CD14-positive monocyte (primary cell): ENCODE measurements at regions of chr19 and their contacts with region 1.

Region 1: GRCh38 chr19:703651-704446 is 4.9 kb upstream of the PALM start:
- DNase-seq: peak; percentile 90 to 94 (median 93)
- H3K4me3 ChIP-seq: peak overlapping the region; percentile 80 to 91 (median 86)
- H3K4me3 Mint-ChIP-seq: peak overlapping the region; percentile 94 to 98
- H3K27ac ChIP-seq: peak overlapping the region; percentile 58 to 66
- H3K27ac Mint-ChIP-seq: peak overlapping the region; percentile 92 to 98 (median 96)
- H3K4me1 ChIP-seq: peaks cover 53 to 60% of the 10 kb centered on the region in 2 donors
- H3K4me1 Mint-ChIP-seq: peaks cover 43% of the 10 kb centered on the region
- H3K27me3 ChIP-seq: peaks cover 0 to 9% of the 10 kb centered on the region in 2 donors
- H3K27me3 Mint-ChIP-seq: peaks cover 10 to 15% (median 15%) of the 10 kb centered on the region in 3 donors
- CTCF ChIP-seq: no peak

Region 2: GRCh38 chr19:680287-681028 is 23.4 kb before region 1 on chr19:
- intact Hi-C with region 1: loop called (anchors 1 kb)
- DNase-seq: peak; percentile 97 to 99 (median 99)
- H3K4me3 ChIP-seq: peak overlapping the region; percentile 45 to 76 (median 53)
- H3K4me3 Mint-ChIP-seq: peak overlapping the region; percentile 90 to 97
- H3K27ac ChIP-seq: peak overlapping the region; percentile 91 to 96
- H3K27ac Mint-ChIP-seq: peak overlapping the region; percentile 98 to 100 (median 100)
- H3K4me1 ChIP-seq: peaks cover 39 to 48% of the 10 kb centered on the region in 2 donors
- H3K4me1 Mint-ChIP-seq: peaks cover 37% of the 10 kb centered on the region
- H3K27me3 ChIP-seq: peaks cover 0 to 20% of the 10 kb centered on the region in 2 donors
- H3K27me3 Mint-ChIP-seq: peaks cover 5 to 32% (median 22%) of the 10 kb centered on the region in 3 donors
- CTCF ChIP-seq: peak; percentile 44

Region 3: GRCh38 chr19:728011-728410 is 24.2 kb after region 1 on chr19:
- intact Hi-C with region 1: no loop called
- DNase-seq: no peak
- H3K4me3 ChIP-seq: no peak overlapping the region
- H3K4me3 Mint-ChIP-seq: no peak overlapping the region
- H3K27ac ChIP-seq: no peak overlapping the region
- H3K27ac Mint-ChIP-seq: no peak overlapping the region
- H3K4me1 ChIP-seq: no peaks in the 10 kb centered on the region
- H3K4me1 Mint-ChIP-seq: peaks cover 3% of the 10 kb centered on the region
- H3K27me3 ChIP-seq: no peaks in the 10 kb centered on the region
- H3K27me3 Mint-ChIP-seq: peaks cover 2 to 16% (median 4%) of the 10 kb centered on the region in 3 donors
- CTCF ChIP-seq: no peak

Region 4: DNA sequence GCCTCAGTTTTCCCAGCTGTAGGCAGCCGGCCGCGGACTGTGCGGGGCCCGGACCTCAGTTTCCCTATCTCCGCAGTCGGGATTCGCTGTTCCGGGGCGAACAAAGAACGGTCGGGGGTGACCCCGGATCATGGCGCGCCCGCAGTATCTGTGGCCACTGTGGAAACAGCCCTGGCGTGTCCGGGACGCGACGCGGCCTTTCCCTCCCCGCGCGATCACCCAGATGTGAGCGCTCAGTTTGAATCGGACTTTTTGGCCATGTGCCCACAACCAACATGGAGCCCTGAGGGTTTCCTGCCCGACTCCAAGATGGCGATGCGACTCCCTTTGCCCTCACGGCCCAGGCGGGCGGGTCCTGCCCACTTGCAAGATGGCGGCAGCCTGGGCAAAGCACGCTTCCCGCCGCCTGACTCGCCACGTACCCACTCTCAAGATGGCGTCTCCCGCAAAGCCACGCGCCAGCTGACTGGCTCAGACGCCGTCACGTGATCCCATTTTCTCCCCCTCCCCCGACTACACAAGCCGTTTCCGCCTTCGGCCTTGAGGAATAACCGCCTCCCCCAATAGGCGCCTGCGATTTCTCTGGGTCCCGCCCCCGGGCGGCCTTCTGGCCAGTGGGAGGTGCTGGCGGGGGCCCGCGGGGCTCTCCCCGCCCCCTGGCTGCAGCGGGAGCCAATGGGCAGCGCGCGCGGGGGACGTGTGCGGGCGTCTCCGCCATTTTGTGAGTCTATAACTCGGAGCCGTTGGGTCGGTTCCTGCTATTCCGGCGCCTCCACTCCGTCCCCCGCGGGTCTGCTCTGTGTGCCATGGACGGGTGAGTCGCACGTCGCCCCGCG is 93.1 kb after region 1 on chr19 and contains the start of gene PTBP1:
- intact Hi-C with region 1: loop called in 1 of 2 experiments (anchors 2 kb)
- DNase-seq: peak; percentile 100
- H3K4me3 ChIP-seq: peak within 1 kb of the TSS; percentile 88 to 97 (median 91)
- H3K4me3 Mint-ChIP-seq: peak within 1 kb of the TSS; percentile 85 to 93
- H3K27ac ChIP-seq: peak within 1 kb of the TSS; percentile 66 to 73
- H3K27ac Mint-ChIP-seq: peak within 1 kb of the TSS; percentile 77 to 91 (median 85)
- H3K4me1 ChIP-seq: peaks cover 40 to 47% of the 10 kb centered on the region in 2 donors
- H3K4me1 Mint-ChIP-seq: peaks cover 28% of the 10 kb centered on the region
- H3K27me3 ChIP-seq: no peaks in the 10 kb centered on the region
- H3K27me3 Mint-ChIP-seq: peaks cover 0 to 1% (median 0%) of the 10 kb centered on the region in 3 donors
- CTCF ChIP-seq: no peak
- polyA plus RNA-seq, gene PTBP1: 62.4 to 117 (median 81.6) TPM